ENCODE measurements at regions of chr3 and their contacts with region 1.

Region 1: DNA sequence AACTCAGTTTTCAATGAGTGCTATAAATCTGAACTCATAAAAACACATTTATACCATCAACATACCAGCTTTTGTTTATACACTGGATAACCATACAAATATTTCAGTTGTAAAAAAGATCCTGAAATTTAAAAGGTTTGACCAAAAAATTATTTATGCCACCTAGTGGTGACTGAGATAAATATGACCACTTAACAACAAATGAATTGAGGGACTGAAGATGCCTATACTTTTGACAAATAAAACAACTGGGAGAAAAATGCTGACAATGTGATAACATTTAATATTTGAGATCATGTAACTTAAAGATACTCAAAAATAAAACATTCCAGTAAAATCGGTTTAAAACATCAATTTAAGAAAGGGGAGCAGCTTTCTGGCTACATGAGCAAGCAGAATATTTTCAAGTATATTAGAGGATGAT is 30.4 kb downstream of the ATG3 start:
- DNase-seq: no peak
- ATAC-seq: no peak
- H3K4me3 ChIP-seq: no peak overlapping the region
- H3K27ac ChIP-seq: no peak overlapping the region
- H3K4me1 ChIP-seq: no peaks in the 10 kb centered on the region
- H3K27me3 ChIP-seq: no peaks in the 10 kb centered on the region
- CTCF ChIP-seq: peak; percentile 26 to 67 (median 52)
- POLR2A ChIP-seq: no peak

Region 2: DNA sequence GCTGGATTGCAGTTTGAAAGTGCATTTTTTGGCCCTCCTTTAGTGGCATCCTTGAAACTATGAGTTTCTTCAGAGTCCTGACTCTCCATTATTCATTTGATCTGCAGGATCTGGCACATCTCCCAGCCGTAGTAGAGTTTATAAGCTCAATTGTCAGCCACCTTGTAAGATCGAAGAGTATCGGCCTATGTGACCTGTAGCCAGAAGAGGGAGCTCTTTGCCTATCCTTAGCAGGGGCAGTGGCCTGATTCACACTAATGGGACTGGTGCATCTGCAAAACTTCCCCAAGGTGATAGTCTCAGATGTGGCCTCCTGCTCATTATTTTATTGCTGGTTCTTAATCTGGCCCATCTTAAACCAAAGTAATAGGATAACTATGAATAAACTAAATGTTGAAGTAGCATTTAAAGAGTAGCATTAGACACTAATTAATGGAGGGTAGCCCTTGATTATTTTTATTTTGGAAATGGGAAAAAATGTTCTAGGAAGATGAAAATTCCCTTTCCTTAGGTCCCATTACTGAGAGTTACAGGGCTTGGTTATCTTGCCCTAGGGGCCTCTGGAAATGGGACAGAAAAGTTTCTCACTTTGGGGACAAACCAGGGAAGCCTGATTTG is 419.5 kb before region 1 on chr3:
- intact Hi-C with region 1: loop called in 8 of 10 experiments (anchors 5 to 10 kb)
- DNase-seq: peak in 2 of 5 donors; percentile 39 to 40
- ATAC-seq: peak; percentile 64 to 86 (median 77)
- H3K4me3 ChIP-seq: no peak overlapping the region
- H3K27ac ChIP-seq: no peak overlapping the region
- H3K4me1 ChIP-seq: peaks cover 0 to 15% (median 8%) of the 10 kb centered on the region in 12 donors
- H3K27me3 ChIP-seq: no peaks in the 10 kb centered on the region
- CTCF ChIP-seq: peak; percentile 62 to 82 (median 70)
- POLR2A ChIP-seq: no peak

Region 3: GRCh38 chr3:112136959-112137693 is 394.2 kb before region 1 on chr3:
- intact Hi-C with region 1: loop called in 4 of 10 experiments (anchors 5 to 10 kb)
- DNase-seq: no peak
- ATAC-seq: peak in 3 of 4 donors; percentile 38 to 63 (median 57)
- H3K4me3 ChIP-seq: no peak overlapping the region
- H3K27ac ChIP-seq: no peak overlapping the region
- H3K4me1 ChIP-seq: peaks cover 0 to 52% (median 0%) of the 10 kb centered on the region in 12 donors
- H3K27me3 ChIP-seq: no peaks in the 10 kb centered on the region
- CTCF ChIP-seq: peak in 11 of 12 donors; percentile 32 to 64 (median 45)
- POLR2A ChIP-seq: no peak

Region 4: DNA sequence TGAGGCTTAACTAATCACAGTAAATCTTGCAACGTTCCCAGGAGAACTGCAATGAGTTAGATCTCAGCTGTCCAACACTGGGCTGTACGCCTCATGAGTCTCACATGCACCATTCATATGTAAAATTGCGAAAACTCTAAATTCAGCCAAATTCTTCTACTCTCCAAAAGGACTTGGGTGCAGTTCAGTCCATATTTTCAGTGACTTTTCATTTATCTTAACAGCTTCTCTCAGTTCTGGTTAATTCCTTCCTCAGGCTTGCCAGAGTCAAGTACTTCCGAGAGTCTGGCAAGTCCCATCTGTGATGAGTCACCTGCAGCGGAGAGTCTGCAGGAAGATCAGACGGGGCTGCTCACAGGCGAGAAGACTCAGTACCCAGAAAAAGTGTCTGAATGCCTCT is 98.1 kb after region 1 on chr3:
- intact Hi-C with region 1: no loop called
- DNase-seq: peak in 3 of 5 donors; percentile 50 to 69 (median 69)
- ATAC-seq: peak; percentile 63 to 93 (median 85)
- H3K4me3 ChIP-seq: peak overlapping the region in 1 of 12 donors; percentile 7
- H3K27ac ChIP-seq: peak overlapping the region in 6 of 12 donors; percentile 1 to 33 (median 21)
- H3K4me1 ChIP-seq: peaks cover 0 to 42% (median 1%) of the 10 kb centered on the region in 12 donors
- H3K27me3 ChIP-seq: no peaks in the 10 kb centered on the region
- CTCF ChIP-seq: no peak
- POLR2A ChIP-seq: no peak

Measured in heart left ventricle (tissue), 16 donors.